ENCODE measurements at regions of chr6 and their contacts with region 1.

Region 1: DNA sequence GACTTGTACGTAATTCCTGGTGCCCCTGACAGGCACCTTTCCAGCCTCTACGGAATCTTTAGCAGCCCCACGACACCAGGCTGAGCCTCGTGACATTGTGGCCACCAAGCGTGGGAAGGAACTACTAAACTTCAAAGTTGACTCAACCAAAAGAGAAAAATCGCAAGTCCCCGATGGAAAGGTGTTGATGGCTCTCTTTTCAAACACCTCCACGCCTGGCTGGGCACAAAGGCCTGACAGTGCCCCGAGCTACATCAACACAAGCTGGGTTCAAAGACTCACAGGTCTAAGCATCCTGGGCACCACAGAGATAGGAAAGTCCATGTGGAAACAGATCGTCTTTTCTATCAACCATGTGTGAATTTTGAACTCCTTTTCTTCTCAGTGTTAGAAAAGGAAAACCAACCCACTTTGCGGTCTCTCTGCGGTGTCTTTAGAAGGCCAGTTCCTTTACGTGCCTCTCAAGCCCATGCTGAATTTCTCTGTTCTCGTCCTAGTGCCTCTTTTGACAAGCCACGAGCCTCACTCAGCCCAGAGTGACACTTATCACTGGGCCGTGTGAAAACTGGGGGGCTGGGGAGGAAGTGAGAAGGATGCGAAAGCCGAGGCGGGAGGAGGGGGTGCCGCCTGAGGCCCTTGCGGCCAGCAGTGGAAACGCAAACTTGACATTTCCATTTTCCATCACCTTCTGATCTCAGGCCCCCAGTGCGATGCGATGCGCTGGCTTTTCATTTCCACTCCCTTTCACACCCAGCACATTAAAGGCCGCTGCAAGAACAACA is 59.4 kb downstream of the GFOD1 start:
- DNase-seq: peak; percentile 59
- H3K4me3 ChIP-seq: no peak overlapping the region
- H3K27ac ChIP-seq: peak overlapping the region; percentile 35 to 41 (median 38)
- H3K4me1 ChIP-seq: peaks cover 0 to 30% (median 9%) of the 10 kb centered on the region in 4 donors
- H3K27me3 ChIP-seq: no peaks in the 10 kb centered on the region
- CTCF ChIP-seq: peak in 2 of 5 experiments; percentile 11 to 18
- EP300 ChIP-seq: no peak
- POLR2A ChIP-seq: no peak

Region 2: GRCh38 chr6:11537229-11538051 is 1890.6 kb before region 1 on chr6 and contains the start of gene TMEM170B:
- in situ Hi-C with region 1: no loop called
- intact Hi-C with region 1: loop called (anchors 10 kb)
- DNase-seq: peak; percentile 94
- H3K4me3 ChIP-seq: peak within 1 kb of the TSS; percentile 91 to 99 (median 98)
- H3K27ac ChIP-seq: peak within 1 kb of the TSS; percentile 77 to 88 (median 84)
- H3K4me1 ChIP-seq: peaks cover 0 to 14% (median 8%) of the 10 kb centered on the region in 4 donors
- H3K27me3 ChIP-seq: no peaks in the 10 kb centered on the region
- CTCF ChIP-seq: no peak
- EP300 ChIP-seq: no peak
- POLR2A ChIP-seq: peak; percentile 21
- total RNA-seq, gene TMEM170B: 1.6 to 8.0 (median 3.0) TPM